ENCODE measurements at regions of chr2 and their contacts with region 1.

Region 1: DNA sequence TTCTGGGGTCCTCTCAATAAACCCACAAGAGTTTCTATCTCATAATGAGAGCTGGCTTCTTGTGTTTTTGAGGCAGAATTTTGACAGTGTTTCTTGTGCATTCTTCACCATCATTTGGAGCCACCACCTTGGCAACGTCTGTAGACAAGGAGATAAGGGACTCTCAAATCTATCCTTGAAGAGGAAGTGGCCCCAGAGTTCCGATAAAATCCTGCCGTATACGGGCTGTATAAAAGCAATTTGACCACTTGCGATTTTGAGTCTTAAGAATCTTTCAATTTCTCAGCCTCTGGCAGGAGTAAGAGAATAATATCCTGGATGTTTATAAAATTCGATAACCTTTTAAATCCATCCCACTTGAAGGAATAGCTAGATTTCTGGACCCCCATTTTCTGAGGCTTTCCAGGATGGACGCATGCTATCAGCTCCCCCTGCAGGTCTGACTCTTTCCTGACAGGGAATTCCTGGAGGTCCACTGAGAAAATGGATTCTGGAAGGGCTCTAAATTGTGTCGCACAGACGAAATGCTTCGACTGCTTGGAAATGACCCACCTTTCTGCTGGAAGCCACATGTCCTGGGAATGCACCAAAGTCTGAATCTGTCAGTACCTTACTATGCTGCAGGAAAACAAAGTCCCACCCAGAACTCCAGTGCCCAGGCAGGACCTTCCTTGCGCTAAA is 54.1 kb downstream of the E2F6 start:
- DNase-seq: no peak

Region 2: DNA sequence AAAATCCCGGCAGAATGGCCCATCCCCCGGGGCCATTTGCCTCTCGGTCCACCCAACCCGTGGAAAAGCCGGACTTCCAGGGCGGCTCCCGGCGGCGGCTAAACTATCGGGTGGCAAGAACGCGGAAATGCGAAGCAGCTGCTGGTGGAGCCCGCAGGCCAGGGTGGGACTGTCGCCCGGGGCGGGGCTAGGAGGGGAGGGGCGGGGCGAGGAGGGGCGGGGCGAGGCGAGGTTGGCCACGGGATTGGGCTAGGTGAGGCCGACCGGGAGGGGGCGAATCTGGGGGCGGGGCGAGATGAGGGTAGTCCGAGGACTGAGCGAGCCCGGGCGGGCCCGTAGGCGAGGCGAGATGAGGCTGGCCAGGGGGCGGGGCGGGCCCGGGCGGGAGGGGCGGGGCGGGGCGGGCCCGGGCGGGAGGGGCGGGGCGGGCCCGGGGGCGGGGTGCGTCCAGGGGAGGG is 257.0 kb before region 1 on chr2:
- intact Hi-C with region 1: loop called (anchors 10 kb)
- DNase-seq: peak; percentile 99

Region 3: GRCh38 chr2:11234309-11234708 is 177.6 kb before region 1 on chr2:
- intact Hi-C with region 1: loop called (anchors 1 kb)
- DNase-seq: no peak

Region 4: DNA sequence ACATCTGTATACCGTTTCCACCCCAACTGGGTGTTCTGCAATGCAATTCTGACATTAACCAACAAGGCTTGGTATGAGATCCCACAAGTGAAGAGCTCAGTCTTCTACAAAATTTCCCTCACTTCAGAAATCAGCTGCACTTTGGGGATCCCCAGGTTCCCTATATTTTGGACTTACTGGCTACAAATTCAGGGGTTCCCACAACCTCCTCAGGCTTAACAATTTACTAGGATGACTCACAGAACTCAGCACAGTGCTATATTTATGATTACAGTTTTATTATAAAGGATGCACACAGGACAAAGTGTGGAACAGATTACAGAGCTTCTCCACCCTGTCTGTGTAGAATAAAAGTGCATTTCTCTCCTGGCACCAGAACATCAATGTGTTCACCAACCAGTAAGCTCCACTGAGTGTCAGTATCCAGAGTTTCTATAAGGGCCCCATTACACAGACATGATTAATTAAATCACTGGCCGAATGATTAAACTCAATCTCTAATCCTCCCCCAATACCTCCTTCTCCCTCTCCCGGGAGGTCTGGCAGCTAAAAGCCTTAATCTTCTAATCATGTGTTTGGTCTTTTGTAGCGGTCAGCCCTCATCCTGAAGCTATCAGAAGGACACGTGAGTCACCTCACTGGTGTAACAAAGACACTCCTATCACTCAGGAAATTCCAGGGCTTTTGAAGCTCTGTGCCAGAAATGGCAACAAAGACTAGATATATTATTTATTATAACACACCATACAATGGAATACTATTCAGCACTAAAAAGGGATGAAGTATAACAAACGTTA is 172.0 kb before region 1 on chr2:
- intact Hi-C with region 1: loop called (anchors 2 kb)
- DNase-seq: no peak

Region 5: GRCh38 chr2:11446733-11447248 is 34.9 kb after region 1 on chr2:
- intact Hi-C with region 1: loop called (anchors 5 kb)
- DNase-seq: no peak

Measured in cardiac septum (tissue), 1 donor.